ENCODE measurements at regions of chr3 and their contacts with region 1.

Region 1: DNA sequence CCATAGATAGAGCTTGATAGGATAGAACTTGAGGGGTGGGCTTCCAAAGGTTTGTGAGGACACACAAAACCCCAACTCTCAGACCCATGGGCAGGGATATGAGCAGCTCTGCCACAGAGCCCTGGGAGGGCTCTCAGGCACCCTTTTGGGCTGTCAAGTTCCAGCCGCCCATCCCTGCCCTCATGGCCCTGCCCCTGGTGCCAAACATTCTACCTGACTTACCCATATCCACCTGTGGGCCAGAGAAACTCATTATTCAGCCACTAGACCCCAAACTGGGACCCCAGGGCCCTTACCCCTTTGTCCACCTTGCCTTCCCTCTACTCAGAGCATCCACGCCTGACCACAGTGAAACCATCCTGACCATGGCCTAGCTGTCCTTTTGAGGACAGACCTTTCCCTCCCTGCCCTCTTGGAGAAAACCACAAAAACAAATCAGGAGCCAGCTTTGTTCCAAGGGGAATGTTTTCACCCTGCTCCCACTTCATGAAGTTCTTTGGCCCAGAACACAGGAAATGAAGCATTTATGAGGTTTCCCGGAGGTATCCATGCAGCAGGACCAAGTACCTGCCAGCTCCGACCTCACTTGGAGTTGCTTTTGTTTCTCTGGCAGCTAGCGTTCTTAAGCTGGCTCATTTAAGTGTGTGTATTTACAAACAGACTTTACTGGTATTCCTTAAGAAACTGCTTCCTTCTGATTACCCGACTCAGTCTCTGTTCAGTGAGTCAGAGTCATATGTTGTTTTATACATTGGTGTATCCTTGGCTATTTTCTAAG is 34.2 kb upstream of the GALNT15 start:
- DNase-seq: peak; percentile 78
- ATAC-seq: peak; percentile 88
- H3K4me3 ChIP-seq: no peak overlapping the region
- H3K27ac ChIP-seq: peak overlapping the region; percentile 58
- H3K4me1 ChIP-seq: peaks cover 15% of the 10 kb centered on the region
- H3K27me3 ChIP-seq: no peaks in the 10 kb centered on the region
- CTCF ChIP-seq: no peak

Region 2: GRCh38 chr3:16090024-16090423 is 50.3 kb before region 1 on chr3:
- CTCF ChIA-PET with region 1: interaction called, 3 read pairs
- POLR2A ChIA-PET with region 1: no interaction called
- intact Hi-C with region 1: loop called (anchors 1 kb)
- DNase-seq: peak; percentile 98
- ATAC-seq: peak; percentile 96
- H3K4me3 ChIP-seq: no peak overlapping the region
- H3K27ac ChIP-seq: peak overlapping the region; percentile 52
- H3K4me1 ChIP-seq: peaks cover 30% of the 10 kb centered on the region
- H3K27me3 ChIP-seq: no peaks in the 10 kb centered on the region
- CTCF ChIP-seq: no peak

Region 3: DNA sequence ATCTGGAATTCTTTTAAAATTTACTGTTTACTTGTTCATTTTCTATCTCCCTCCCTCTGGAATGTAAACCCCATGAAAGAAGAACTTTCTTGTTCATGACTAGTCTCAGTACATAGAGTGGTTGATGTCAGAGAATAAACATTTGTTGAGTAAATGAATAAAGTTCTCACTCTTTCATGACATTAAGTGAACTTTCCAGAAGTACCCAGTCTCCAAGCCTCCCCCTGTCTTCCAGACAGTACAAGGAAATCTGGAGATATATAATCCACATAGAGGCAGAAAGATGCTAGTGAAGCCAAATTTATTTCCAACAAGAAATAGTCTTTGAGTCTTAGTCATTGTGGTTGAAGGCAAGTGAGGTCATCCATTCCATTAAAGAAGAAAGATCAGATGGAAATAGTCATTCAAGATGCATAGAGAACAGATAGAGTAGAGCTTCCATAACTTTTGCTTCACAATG is 37.4 kb before region 1 on chr3:
- CTCF ChIA-PET with region 1: no interaction called
- POLR2A ChIA-PET with region 1: no interaction called
- intact Hi-C with region 1: loop called (anchors 1 kb)
- DNase-seq: peak; percentile 68
- ATAC-seq: peak; percentile 63
- H3K4me3 ChIP-seq: no peak overlapping the region
- H3K27ac ChIP-seq: peak overlapping the region; percentile 97
- H3K4me1 ChIP-seq: peaks cover 22% of the 10 kb centered on the region
- H3K27me3 ChIP-seq: no peaks in the 10 kb centered on the region
- CTCF ChIP-seq: no peak; the same call in 1 of the 2 replicates

Region 4: GRCh38 chr3:16177962-16178627 is 37.8 kb after region 1 on chr3:
- CTCF ChIA-PET with region 1: interaction called, 3 read pairs
- POLR2A ChIA-PET with region 1: no interaction called
- intact Hi-C with region 1: loop called (anchors 5 kb)
- DNase-seq: peak; percentile 84
- ATAC-seq: peak; percentile 94
- H3K4me3 ChIP-seq: no peak overlapping the region
- H3K27ac ChIP-seq: no peak overlapping the region
- H3K4me1 ChIP-seq: peaks cover 12% of the 10 kb centered on the region; the same call in 1 of the 2 replicates
- H3K27me3 ChIP-seq: no peaks in the 10 kb centered on the region
- CTCF ChIP-seq: peak; percentile 96

Region 5: GRCh38 chr3:16203031-16203430 is 62.7 kb after region 1 on chr3:
- CTCF ChIA-PET with region 1: no interaction called
- POLR2A ChIA-PET with region 1: no interaction called
- intact Hi-C with region 1: no loop called
- DNase-seq: peak; percentile 93
- ATAC-seq: peak; percentile 72
- H3K4me3 ChIP-seq: no peak overlapping the region
- H3K27ac ChIP-seq: peak overlapping the region; percentile 94
- H3K4me1 ChIP-seq: peaks cover 54% of the 10 kb centered on the region
- H3K27me3 ChIP-seq: no peaks in the 10 kb centered on the region
- CTCF ChIP-seq: no peak

Measured in PC-3 (cell line).